ENCODE measurements at regions of chr11 and their contacts with region 1.

Region 1: DNA sequence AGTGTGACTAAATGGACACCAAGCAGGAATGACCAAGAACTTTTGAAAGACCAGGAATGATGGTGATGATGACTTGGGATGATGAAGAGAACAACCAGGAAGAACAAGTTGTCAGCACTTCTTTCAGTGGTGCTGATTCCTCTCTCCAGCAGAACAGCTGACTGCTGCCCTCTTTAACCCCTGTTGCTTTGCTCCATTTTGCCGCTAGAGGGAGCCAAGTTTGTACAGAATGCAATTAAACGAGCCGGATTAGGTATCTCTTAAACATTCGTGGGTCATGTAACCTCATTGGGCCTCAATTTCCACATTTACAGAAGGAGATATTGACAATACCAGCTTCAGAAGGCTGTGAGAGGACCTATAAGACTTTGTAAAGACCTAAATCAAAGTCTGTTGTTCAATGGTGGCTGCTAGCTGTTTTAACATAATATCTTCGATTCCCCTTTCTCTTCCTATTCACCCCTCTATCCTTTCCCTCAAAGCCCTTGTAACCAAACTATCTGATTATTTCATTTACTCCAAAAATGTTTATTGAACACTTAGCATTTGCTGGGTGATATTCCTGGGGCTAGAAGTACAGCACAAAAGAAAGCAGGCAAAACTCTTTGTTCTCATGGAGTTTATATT is 1.9 kb downstream of the OR4S1 start:
- DNase-seq: no peak
- ATAC-seq: peak; percentile 85
- H3K4me3 ChIP-seq: no peak overlapping the region
- H3K27ac ChIP-seq: no peak overlapping the region
- H3K4me1 ChIP-seq: no peaks in the 10 kb centered on the region
- H3K27me3 ChIP-seq: no peaks in the 10 kb centered on the region
- CTCF ChIP-seq: peak; percentile 86 to 96 (median 90)
- EP300 ChIP-seq: no peak
- POLR2A ChIP-seq: no peak
- RAD21 ChIP-seq: peak; percentile 93

Region 2: GRCh38 chr11:47946682-47947575 is 360.9 kb before region 1 on chr11:
- CTCF ChIA-PET with region 1: no interaction called
- POLR2A ChIA-PET with region 1: no interaction called
- RAD21 ChIA-PET with region 1: no interaction called
- SMC1A ChIA-PET with region 1: no interaction called
- in situ Hi-C with region 1: loop called (anchors 25 kb)
- intact Hi-C with region 1: no loop called
- DNase-seq: no peak
- ATAC-seq: peak; percentile 37; the same call in 1 of the 3 replicates
- H3K4me3 ChIP-seq: no peak overlapping the region
- H3K27ac ChIP-seq: no peak overlapping the region
- H3K4me1 ChIP-seq: peaks cover 8% of the 10 kb centered on the region; the same call in 1 of the 2 replicates
- H3K27me3 ChIP-seq: no peaks in the 10 kb centered on the region
- CTCF ChIP-seq: no peak
- EP300 ChIP-seq: no peak
- POLR2A ChIP-seq: no peak
- RAD21 ChIP-seq: no peak

Region 3: GRCh38 chr11:48034926-48035871 is 272.7 kb before region 1 on chr11:
- CTCF ChIA-PET with region 1: no interaction called
- POLR2A ChIA-PET with region 1: no interaction called
- RAD21 ChIA-PET with region 1: no interaction called
- SMC1A ChIA-PET with region 1: no interaction called
- in situ Hi-C with region 1: no loop called
- intact Hi-C with region 1: no loop called
- DNase-seq: no peak
- ATAC-seq: no peak
- H3K4me3 ChIP-seq: no peak overlapping the region
- H3K27ac ChIP-seq: no peak overlapping the region
- H3K4me1 ChIP-seq: peaks cover 49% of the 10 kb centered on the region
- H3K27me3 ChIP-seq: no peaks in the 10 kb centered on the region
- CTCF ChIP-seq: no peak
- EP300 ChIP-seq: no peak
- POLR2A ChIP-seq: no peak
- RAD21 ChIP-seq: no peak

Region 4: GRCh38 chr11:48055292-48056132 is 252.4 kb before region 1 on chr11:
- CTCF ChIA-PET with region 1: no interaction called
- POLR2A ChIA-PET with region 1: no interaction called
- RAD21 ChIA-PET with region 1: no interaction called
- SMC1A ChIA-PET with region 1: no interaction called
- in situ Hi-C with region 1: no loop called
- intact Hi-C with region 1: no loop called
- DNase-seq: no peak
- ATAC-seq: peak; percentile 69
- H3K4me3 ChIP-seq: peak overlapping the region; percentile 2; the same call in 1 of the 2 replicates
- H3K27ac ChIP-seq: peak overlapping the region; percentile 53
- H3K4me1 ChIP-seq: peaks cover 44% of the 10 kb centered on the region
- H3K27me3 ChIP-seq: no peaks in the 10 kb centered on the region
- CTCF ChIP-seq: no peak
- EP300 ChIP-seq: no peak
- POLR2A ChIP-seq: no peak
- RAD21 ChIP-seq: no peak

Region 5: DNA sequence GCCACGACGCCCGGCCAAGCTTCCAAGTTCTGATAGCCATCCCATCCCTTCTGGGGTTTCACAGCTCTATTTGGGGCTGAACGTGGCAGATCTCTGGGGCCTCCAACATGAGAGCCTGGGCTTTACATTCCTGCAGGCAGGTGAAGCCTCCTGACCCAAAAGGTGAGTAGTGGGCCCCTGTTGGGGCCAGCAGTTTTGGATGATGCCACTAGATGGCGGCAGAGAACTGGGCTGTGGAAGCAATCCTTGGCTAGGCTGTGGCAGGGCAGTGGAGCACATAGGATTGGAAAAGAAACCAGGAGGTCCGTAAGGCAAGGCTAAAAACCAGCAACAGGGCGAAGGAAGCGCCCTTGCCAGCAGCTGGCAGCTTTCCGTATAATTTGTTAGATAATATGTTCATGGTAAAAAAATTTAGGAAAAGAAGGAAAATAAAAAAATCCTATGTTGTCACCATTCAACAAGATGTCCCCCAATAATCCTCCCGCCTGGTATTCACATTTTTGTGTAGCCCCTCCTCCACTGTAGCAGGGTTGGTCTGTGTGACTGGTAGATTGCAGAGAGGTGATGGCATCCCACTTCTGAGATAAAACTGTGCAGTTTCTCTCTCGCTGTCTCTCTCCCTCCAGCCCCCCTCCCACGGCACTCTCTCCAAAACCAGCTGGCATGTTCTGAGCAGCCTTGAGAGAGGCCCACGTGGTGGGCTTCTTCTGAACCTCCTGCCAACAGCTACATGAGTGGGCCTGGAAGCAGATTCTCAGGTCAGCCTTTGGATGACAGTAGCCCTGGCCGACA is 134.9 kb before region 1 on chr11:
- CTCF ChIA-PET with region 1: interaction called, 3 read pairs
- POLR2A ChIA-PET with region 1: no interaction called
- RAD21 ChIA-PET with region 1: interaction called, 6 read pairs
- SMC1A ChIA-PET with region 1: no interaction called
- in situ Hi-C with region 1: no loop called
- intact Hi-C with region 1: loop called (anchors 2 kb)
- DNase-seq: no peak
- ATAC-seq: peak; percentile 96
- H3K4me3 ChIP-seq: no peak overlapping the region
- H3K27ac ChIP-seq: no peak overlapping the region
- H3K4me1 ChIP-seq: peaks cover 4% of the 10 kb centered on the region; the same call in 1 of the 2 replicates
- H3K27me3 ChIP-seq: no peaks in the 10 kb centered on the region
- CTCF ChIP-seq: peak; percentile 83 to 99 (median 96)
- EP300 ChIP-seq: no peak
- POLR2A ChIP-seq: no peak
- RAD21 ChIP-seq: peak; percentile 89

Region 6: DNA sequence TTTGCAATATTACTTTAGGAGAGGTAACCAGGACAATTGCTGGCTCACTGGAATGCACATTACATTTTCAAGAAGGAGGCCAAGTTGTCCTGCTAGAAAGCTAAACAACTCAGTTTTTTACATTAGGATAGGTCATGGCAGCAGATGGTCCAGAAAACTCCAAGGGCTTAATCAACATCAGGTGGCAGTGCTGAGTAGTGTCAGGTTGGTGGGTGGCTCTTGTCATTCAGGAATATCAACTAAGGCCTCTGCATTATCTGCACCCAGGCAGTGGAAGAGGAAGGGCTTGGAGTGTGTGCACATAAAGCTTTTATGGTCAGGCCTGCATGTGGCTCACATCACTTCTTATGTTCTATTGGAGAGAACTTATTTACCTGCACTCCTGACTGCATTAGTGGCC is 123.4 kb before region 1 on chr11:
- CTCF ChIA-PET with region 1: no interaction called
- POLR2A ChIA-PET with region 1: no interaction called
- RAD21 ChIA-PET with region 1: no interaction called
- SMC1A ChIA-PET with region 1: no interaction called
- in situ Hi-C with region 1: no loop called
- intact Hi-C with region 1: no loop called
- DNase-seq: no peak
- ATAC-seq: no peak
- H3K4me3 ChIP-seq: no peak overlapping the region
- H3K27ac ChIP-seq: no peak overlapping the region
- H3K4me1 ChIP-seq: no peaks in the 10 kb centered on the region
- H3K27me3 ChIP-seq: no peaks in the 10 kb centered on the region
- CTCF ChIP-seq: no peak
- EP300 ChIP-seq: no peak
- POLR2A ChIP-seq: no peak
- RAD21 ChIP-seq: no peak

Region 7: GRCh38 chr11:48384670-48385069 is 76.8 kb after region 1 on chr11:
- CTCF ChIA-PET with region 1: no interaction called
- POLR2A ChIA-PET with region 1: no interaction called
- RAD21 ChIA-PET with region 1: no interaction called
- SMC1A ChIA-PET with region 1: no interaction called
- in situ Hi-C with region 1: no loop called
- intact Hi-C with region 1: no loop called
- DNase-seq: no peak
- ATAC-seq: no peak
- H3K4me3 ChIP-seq: no peak overlapping the region
- H3K27ac ChIP-seq: no peak overlapping the region
- H3K4me1 ChIP-seq: no peaks in the 10 kb centered on the region
- H3K27me3 ChIP-seq: no peaks in the 10 kb centered on the region
- CTCF ChIP-seq: peak in 2 of 3 experiments; percentile 13 to 22; a peak in 2 of 6 replicates
- EP300 ChIP-seq: no peak
- POLR2A ChIP-seq: no peak
- RAD21 ChIP-seq: no peak

Region 8: DNA sequence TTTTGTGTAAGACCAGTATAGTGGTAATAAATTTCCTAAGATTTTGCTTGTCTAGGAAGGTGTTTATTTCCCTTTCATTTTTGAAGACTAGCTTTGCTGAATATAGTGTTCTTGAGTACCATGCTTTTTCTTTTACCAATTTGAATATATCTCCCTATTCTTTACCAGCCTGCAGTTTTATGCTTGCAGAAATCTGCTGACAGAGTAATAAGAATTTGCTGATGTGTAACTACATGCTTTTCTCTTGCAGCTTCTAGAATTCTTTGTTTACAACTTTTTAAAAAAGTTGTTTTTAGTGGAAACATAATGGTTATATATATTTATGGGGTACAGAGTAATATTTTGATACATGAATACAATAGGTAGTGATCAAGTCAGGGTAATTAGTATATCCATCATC is 1225.3 kb after region 1 on chr11:
- CTCF ChIA-PET with region 1: interaction called, 3 read pairs
- POLR2A ChIA-PET with region 1: no interaction called
- RAD21 ChIA-PET with region 1: no interaction called
- SMC1A ChIA-PET with region 1: no interaction called
- in situ Hi-C with region 1: loop called (anchors 10 kb)
- intact Hi-C with region 1: loop called (anchors 5 kb)
- DNase-seq: no peak
- ATAC-seq: no peak
- H3K4me3 ChIP-seq: no peak overlapping the region
- H3K27ac ChIP-seq: no peak overlapping the region
- H3K4me1 ChIP-seq: no peaks in the 10 kb centered on the region
- H3K27me3 ChIP-seq: no peaks in the 10 kb centered on the region
- CTCF ChIP-seq: no peak
- EP300 ChIP-seq: no peak
- POLR2A ChIP-seq: no peak
- RAD21 ChIP-seq: no peak

Region 9: DNA sequence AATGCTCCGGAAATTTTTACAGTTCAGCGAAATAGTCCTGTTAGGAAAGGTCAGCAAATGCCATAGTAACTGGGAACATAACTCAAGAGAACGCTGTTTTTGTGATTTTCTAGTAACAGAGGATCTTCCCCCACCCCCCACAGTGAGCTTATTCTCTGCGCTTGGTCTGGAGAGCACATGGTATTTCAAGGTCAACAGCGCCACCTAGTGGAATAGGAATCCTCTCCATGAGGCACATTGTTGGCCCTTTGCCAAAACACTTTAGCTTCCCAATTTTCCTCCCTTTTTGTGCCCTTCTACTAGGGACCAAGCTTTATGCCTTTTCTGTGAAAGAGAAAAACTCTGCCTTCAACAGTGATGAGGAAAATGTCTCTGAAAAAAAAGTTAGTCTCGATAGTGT is 1687.7 kb after region 1 on chr11:
- CTCF ChIA-PET with region 1: interaction called, 21 read pairs
- POLR2A ChIA-PET with region 1: no interaction called
- RAD21 ChIA-PET with region 1: interaction called, 4 read pairs
- SMC1A ChIA-PET with region 1: interaction called, 4 read pairs
- in situ Hi-C with region 1: no loop called
- intact Hi-C with region 1: loop called (anchors 5 kb)
- DNase-seq: no peak
- ATAC-seq: 0 out of 3 replicates have a peak, but pooled peaks have one; percentile 30
- H3K4me3 ChIP-seq: no peak overlapping the region
- H3K27ac ChIP-seq: no peak overlapping the region
- H3K4me1 ChIP-seq: no peaks in the 10 kb centered on the region
- H3K27me3 ChIP-seq: no peaks in the 10 kb centered on the region
- CTCF ChIP-seq: peak; percentile 39 to 49 (median 46); a peak in 5 of 6 replicates
- EP300 ChIP-seq: no peak
- POLR2A ChIP-seq: no peak
- RAD21 ChIP-seq: peak; percentile 66

Measured in GM12878 (cell line).